CD8-positive, alpha-beta T cell (primary cell): ENCODE measurements at regions of chr16 and their contacts with region 1.

Region 1: DNA sequence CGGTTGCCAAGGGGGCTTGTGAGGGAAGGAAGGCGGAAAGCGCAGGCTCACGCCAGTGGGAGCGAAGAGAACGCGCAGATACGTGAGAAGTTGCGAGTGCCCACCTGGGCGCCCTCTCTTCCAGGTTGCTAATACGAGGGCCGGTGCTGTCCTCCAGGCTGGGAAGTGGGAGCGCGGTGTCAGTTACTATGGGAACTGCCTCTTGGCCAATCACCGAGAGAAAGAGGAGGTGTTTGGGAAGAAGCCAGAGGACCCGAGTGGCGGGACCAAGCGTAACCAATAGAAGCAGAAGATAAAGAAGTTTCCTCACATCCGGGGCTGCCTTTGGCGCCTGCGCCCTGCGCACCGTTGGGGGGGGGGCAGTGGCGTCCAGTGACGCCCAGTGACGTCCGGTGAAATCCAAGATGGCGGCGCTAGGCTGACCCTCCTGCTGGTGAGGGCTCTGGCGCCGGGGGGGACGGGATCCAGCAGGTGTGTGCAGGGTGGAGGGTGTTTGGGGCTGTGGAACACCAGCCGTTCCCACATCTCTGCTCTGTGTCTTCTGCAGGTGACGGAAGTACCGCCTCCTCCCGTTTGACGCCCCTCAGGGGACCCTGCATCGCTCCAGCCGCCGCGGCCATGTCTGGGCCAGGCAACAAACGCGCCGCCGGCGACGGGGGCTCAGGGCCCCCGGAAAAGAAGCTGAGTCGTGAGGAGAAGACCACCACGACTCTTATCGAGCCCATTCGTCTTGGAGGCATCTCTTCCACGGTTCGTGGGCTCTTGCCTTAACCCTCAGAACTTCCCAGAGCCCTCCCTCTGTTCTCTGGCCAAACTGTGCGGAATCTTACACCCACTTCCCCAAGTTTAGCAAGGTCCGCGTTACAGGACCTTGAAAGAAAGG is at the starts of genes CFAP119 and RNF40:
- DNase-seq: peak; percentile 67 to 96 (median 90)
- ATAC-seq: peak; percentile 91
- H3K4me3 ChIP-seq: peak within 1 kb of the TSS; percentile 59 to 95
- H3K4me3 Mint-ChIP-seq: peak within 1 kb of the TSS; percentile 96
- H3K27ac ChIP-seq: peak within 1 kb of the TSS; percentile 74 to 93
- H3K27ac Mint-ChIP-seq: peak within 1 kb of the TSS; percentile 92
- H3K4me1 ChIP-seq: peaks cover 24% of the 10 kb centered on the region
- H3K4me1 Mint-ChIP-seq: peaks cover 26% of the 10 kb centered on the region
- H3K27me3 ChIP-seq: no peaks in the 10 kb centered on the region
- H3K27me3 Mint-ChIP-seq: no peaks in the 10 kb centered on the region
- CTCF ChIP-seq: no peak
- total RNA-seq, gene CFAP119: 2.7 to 3.6 TPM
- total RNA-seq, gene RNF40: 98.7 to 101 TPM

Region 2: DNA sequence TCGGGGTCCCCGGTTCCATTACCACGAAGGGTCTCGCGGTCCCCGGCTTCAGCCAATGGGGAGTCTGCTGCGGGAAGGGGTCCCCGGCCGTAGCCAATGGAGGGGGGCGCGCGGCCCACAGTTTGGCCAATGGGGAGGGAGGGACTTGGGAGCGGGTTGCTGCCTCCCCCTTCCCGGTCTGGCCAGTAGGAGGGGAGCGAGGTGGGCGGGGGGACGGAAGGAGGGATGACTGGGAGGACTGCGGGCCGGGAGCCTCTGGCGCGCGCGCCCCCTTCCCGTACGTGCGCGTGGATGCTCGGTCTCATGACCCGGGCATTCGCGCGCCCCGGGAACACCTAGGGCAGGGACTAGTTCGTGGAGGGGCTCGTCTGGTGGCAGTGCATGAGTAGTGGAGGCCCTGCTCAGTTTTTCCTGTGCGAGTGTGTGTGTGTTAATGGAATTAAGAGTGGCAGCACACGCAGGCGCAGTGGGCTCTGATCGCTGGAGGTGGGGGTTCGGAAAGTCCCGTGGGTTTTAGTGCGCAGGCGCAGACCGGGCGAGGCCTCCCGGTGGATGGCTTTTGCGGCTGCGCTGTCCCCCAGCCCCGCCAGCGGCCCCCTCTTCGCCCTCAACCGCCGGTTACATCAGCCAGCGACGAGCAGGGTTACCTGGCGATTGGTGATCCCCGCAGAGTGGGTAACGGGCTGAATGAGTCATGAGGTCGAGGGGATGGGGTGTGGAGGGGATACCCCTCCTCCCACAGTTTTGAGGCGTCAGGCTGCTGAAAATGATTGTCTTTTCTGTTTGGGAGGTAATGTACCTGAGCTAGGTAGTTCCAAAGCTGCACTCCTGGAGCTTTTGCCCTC is 1938.1 kb before region 1 on chr16:
- CTCF ChIA-PET with region 1: no interaction called
- POLR2A ChIA-PET with region 1: no interaction called
- intact Hi-C with region 1: no loop called
- DNase-seq: peak; percentile 88 to 97 (median 95)
- ATAC-seq: peak; percentile 67
- H3K4me3 ChIP-seq: peak overlapping the region; percentile 74 to 94
- H3K4me3 Mint-ChIP-seq: peak overlapping the region; percentile 97
- H3K27ac ChIP-seq: peak overlapping the region; percentile 93 to 94
- H3K27ac Mint-ChIP-seq: peak overlapping the region; percentile 99
- H3K4me1 ChIP-seq: peaks cover 30% of the 10 kb centered on the region
- H3K4me1 Mint-ChIP-seq: peaks cover 43% of the 10 kb centered on the region
- H3K27me3 ChIP-seq: no peaks in the 10 kb centered on the region
- H3K27me3 Mint-ChIP-seq: no peaks in the 10 kb centered on the region
- CTCF ChIP-seq: peak; percentile 21

Region 3: GRCh38 chr16:30715737-30716445 is 46.3 kb before region 1 on chr16:
- CTCF ChIA-PET with region 1: no interaction called
- POLR2A ChIA-PET with region 1: interaction called, 3 read pairs
- intact Hi-C with region 1: loop called in 1 of 2 experiments (anchors 5 kb)
- DNase-seq: peak in 8 of 9 experiments; percentile 25 to 84 (median 49)
- ATAC-seq: peak; percentile 96
- H3K4me3 ChIP-seq: no peak overlapping the region
- H3K4me3 Mint-ChIP-seq: peak overlapping the region; percentile 55
- H3K27ac ChIP-seq: peak overlapping the region; percentile 23 to 67
- H3K27ac Mint-ChIP-seq: peak overlapping the region; percentile 95
- H3K4me1 ChIP-seq: peaks cover 18% of the 10 kb centered on the region
- H3K4me1 Mint-ChIP-seq: peaks cover 35% of the 10 kb centered on the region
- H3K27me3 ChIP-seq: no peaks in the 10 kb centered on the region
- H3K27me3 Mint-ChIP-seq: no peaks in the 10 kb centered on the region
- CTCF ChIP-seq: no peak

Region 4: DNA sequence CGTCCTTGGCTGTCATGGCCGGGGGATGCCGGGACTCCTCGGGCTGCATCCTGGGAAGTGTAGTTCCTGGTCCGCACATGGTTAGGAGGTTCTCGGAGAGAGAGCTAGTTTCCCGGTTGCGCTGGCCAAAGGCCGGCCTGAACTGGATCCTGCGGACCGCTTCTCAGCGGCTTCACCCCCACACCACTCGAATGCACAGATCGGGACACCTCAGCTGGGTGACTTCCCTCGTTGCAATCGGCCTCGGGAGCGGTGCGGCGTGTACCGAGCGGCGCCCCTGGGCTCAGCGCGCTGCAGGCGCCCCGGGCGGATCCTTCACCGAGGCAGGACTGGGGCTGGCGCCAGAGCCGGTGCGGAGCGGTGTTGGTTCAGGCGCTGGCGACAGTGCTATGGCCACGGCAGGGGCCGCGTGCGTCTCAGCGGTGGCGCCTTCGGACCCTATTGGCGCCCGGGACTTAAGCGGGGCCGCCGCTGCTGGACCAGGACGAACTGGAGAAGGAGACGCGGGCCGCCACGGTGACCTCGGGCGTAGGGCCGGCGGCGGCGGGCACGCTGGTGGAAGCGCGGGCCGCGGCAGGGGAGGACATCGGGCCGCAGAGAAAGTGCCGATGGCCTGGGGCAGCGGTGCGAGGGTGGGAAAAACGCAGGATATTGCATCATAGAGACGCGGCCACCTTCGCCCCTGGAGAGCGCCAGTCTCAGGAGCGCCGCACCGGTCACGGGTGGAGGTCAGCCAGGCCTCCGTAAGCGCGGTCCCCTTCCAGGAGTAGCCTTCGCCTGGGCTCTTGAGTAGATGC is 13.4 kb after region 1 on chr16:
- CTCF ChIA-PET with region 1: interaction called, 3 read pairs
- POLR2A ChIA-PET with region 1: no interaction called
- intact Hi-C with region 1: loop called in 1 of 2 experiments (anchors 1 kb)
- DNase-seq: peak in 8 of 9 experiments; percentile 14 to 72 (median 58)
- ATAC-seq: peak; percentile 85
- H3K4me3 ChIP-seq: peak overlapping the region; percentile 53 to 80
- H3K4me3 Mint-ChIP-seq: peak overlapping the region; percentile 90
- H3K27ac ChIP-seq: no peak overlapping the region
- H3K27ac Mint-ChIP-seq: peak overlapping the region; percentile 27
- H3K4me1 ChIP-seq: peaks cover 14% of the 10 kb centered on the region
- H3K4me1 Mint-ChIP-seq: peaks cover 31% of the 10 kb centered on the region
- H3K27me3 ChIP-seq: no peaks in the 10 kb centered on the region
- H3K27me3 Mint-ChIP-seq: peaks cover 2% of the 10 kb centered on the region
- CTCF ChIP-seq: no peak

Region 5: DNA sequence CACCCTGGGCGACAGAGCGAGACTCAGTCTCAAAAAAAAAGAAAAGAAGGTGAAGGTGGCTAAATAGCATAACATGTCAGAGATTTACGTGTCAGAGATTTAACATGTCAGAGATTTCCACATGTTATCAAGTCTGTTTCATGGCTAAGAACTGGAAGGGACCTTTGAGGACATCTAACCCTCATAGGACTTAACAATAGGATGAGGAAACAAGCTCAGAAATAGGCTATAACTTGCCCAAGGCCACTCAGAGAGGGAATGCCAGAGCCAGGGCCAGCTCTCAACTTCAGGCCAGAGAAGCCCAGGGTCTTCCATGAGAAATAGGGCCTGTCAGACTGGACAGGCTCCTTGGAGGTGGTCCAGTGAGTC is 51.6 kb after region 1 on chr16:
- CTCF ChIA-PET with region 1: interaction called, 3 read pairs
- POLR2A ChIA-PET with region 1: interaction called, 3 read pairs
- intact Hi-C with region 1: loop called (anchors 1 kb)
- DNase-seq: no peak
- ATAC-seq: peak; percentile 2
- H3K4me3 ChIP-seq: peak overlapping the region; percentile 49 to 56
- H3K4me3 Mint-ChIP-seq: peak overlapping the region; percentile 82
- H3K27ac ChIP-seq: peak overlapping the region; percentile 72
- H3K27ac Mint-ChIP-seq: peak overlapping the region; percentile 88
- H3K4me1 ChIP-seq: peaks cover 18% of the 10 kb centered on the region
- H3K4me1 Mint-ChIP-seq: peaks cover 9% of the 10 kb centered on the region
- H3K27me3 ChIP-seq: no peaks in the 10 kb centered on the region
- H3K27me3 Mint-ChIP-seq: no peaks in the 10 kb centered on the region
- CTCF ChIP-seq: no peak

Region 6: GRCh38 chr16:30893744-30894539 is 131.8 kb after region 1 on chr16 and contains the start of gene BCL7C:
- CTCF ChIA-PET with region 1: no interaction called
- POLR2A ChIA-PET with region 1: no interaction called
- intact Hi-C with region 1: loop called in 1 of 2 experiments (anchors 1 kb)
- DNase-seq: peak; percentile 33 to 88 (median 78)
- ATAC-seq: peak; percentile 73
- H3K4me3 ChIP-seq: peak within 1 kb of the TSS; percentile 72 to 85
- H3K4me3 Mint-ChIP-seq: peak within 1 kb of the TSS; percentile 88
- H3K27ac ChIP-seq: peak within 1 kb of the TSS; percentile 45 to 83
- H3K27ac Mint-ChIP-seq: peak within 1 kb of the TSS; percentile 92
- H3K4me1 ChIP-seq: peaks cover 33% of the 10 kb centered on the region
- H3K4me1 Mint-ChIP-seq: peaks cover 43% of the 10 kb centered on the region
- H3K27me3 ChIP-seq: no peaks in the 10 kb centered on the region
- H3K27me3 Mint-ChIP-seq: no peaks in the 10 kb centered on the region
- CTCF ChIP-seq: no peak
- total RNA-seq, gene BCL7C: 16.0 to 16.2 TPM

Region 7: GRCh38 chr16:31033709-31034437 is 271.7 kb after region 1 on chr16:
- CTCF ChIA-PET with region 1: no interaction called
- POLR2A ChIA-PET with region 1: no interaction called
- intact Hi-C with region 1: no loop called
- DNase-seq: peak; percentile 67 to 93 (median 88)
- ATAC-seq: peak; percentile 50
- H3K4me3 ChIP-seq: peak overlapping the region; percentile 84 to 88
- H3K4me3 Mint-ChIP-seq: peak overlapping the region; percentile 98
- H3K27ac ChIP-seq: peak overlapping the region; percentile 98 to 99
- H3K27ac Mint-ChIP-seq: peak overlapping the region; percentile 99
- H3K4me1 ChIP-seq: peaks cover 18% of the 10 kb centered on the region
- H3K4me1 Mint-ChIP-seq: peaks cover 28% of the 10 kb centered on the region
- H3K27me3 ChIP-seq: no peaks in the 10 kb centered on the region
- H3K27me3 Mint-ChIP-seq: no peaks in the 10 kb centered on the region
- CTCF ChIP-seq: no peak